Activated naive CD4-positive, alpha-beta T cell treated with anti-CD3 and anti-CD28 coated beads for 36 hours (primary cell): ENCODE measurements at regions of chr12 and their contacts with region 1.

Region 1: DNA sequence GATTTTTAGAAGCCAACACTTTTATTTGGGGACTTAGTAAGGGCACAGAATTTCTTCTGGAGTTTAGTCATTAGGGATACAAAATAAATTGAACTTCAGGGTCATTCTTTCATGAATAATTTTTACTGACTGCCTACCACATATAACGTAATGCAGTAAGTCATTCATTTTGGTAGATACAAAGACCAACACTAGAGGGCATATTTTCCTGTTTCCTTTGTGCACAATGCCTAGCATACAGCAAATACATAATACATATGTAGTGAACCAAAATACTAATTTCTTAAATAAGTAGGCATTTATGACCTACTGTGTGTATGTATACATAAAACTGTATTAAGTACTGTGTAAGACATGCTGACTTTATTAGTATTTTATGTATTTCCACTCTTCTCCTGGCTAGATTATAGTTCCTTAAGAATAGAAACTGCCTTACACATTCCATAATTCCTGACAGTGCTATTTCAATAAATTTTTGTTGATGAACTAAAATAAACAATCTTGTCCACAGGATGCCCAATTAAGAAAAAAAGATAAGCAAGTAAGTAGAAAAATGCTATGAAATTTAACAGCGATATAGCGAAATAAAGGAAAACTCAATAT is 47.9 kb downstream of the PPP1R12A start:
- DNase-seq: no peak
- H3K4me3 Mint-ChIP-seq: no peak overlapping the region
- H3K27ac Mint-ChIP-seq: no peak overlapping the region
- H3K4me1 Mint-ChIP-seq: peaks cover 71% of the 10 kb centered on the region
- H3K27me3 Mint-ChIP-seq: no peaks in the 10 kb centered on the region

Region 2: GRCh38 chr12:79555028-79555930 is 331.7 kb before region 1 on chr12:
- CTCF ChIA-PET with region 1: no interaction called
- intact Hi-C with region 1: loop called (anchors 10 kb)
- DNase-seq: peak; percentile 11
- H3K4me3 Mint-ChIP-seq: no peak overlapping the region
- H3K27ac Mint-ChIP-seq: no peak overlapping the region
- H3K4me1 Mint-ChIP-seq: no peaks in the 10 kb centered on the region
- H3K27me3 Mint-ChIP-seq: no peaks in the 10 kb centered on the region

Region 3: DNA sequence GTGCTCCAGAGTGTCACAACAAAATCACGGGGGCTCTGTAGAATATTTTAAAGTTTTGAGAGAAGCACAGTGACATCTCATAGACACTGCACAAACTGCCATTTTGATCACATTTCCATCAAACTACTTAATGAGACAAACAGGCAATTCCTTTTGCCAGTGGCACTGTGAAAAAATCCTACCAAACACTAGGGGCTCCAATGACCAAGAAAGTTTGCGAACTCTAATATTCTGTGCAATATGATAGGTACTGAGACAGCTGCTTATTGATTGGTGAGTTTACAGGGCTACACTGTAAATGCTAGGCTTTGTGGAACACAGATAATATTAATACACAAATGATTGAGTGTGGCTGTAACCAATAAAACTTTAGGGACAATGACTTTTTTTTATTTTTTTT is 75.7 kb before region 1 on chr12:
- CTCF ChIA-PET with region 1: no interaction called
- intact Hi-C with region 1: no loop called
- DNase-seq: no peak
- H3K4me3 Mint-ChIP-seq: no peak overlapping the region
- H3K27ac Mint-ChIP-seq: no peak overlapping the region
- H3K4me1 Mint-ChIP-seq: no peaks in the 10 kb centered on the region
- H3K27me3 Mint-ChIP-seq: no peaks in the 10 kb centered on the region

Region 4: GRCh38 chr12:79897617-79898016 is 10.6 kb after region 1 on chr12:
- CTCF ChIA-PET with region 1: interaction called, 6 read pairs
- intact Hi-C with region 1: loop called (anchors 2 kb)
- DNase-seq: no peak
- H3K4me3 Mint-ChIP-seq: no peak overlapping the region
- H3K27ac Mint-ChIP-seq: no peak overlapping the region
- H3K4me1 Mint-ChIP-seq: peaks cover 59% of the 10 kb centered on the region
- H3K27me3 Mint-ChIP-seq: no peaks in the 10 kb centered on the region

Region 5: DNA sequence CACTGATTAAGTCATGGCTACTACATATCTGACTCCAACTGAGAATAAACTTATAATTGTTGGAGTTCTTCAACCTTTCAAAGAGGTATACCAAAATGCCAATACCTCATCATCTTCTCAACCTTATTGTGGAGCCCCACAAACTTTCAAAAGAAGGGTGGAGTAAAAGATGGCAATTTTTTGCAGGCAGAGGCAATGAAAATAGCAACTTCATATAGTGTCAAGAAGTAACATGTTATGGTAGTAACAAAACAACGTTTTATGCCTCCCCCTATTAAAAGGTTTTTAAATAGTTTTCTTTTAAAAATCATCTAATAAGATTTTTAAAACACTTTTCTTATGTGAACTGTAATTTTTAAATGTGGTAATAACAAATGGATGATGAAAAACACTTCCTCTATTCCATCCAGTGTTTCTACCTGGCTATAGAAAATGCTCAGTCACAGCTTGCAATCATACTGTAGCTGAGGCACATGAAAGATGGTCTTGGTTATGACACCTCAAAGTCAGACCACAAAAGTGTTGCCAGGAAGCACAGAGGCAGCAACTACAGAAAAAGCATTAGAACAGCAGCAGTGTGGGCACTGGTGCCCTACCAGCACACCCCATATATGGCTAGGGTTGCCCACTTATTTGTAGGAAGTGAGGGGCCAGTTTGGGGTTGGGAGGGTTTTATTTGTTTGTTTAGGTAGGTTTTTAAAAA is 40.9 kb after region 1 on chr12:
- CTCF ChIA-PET with region 1: no interaction called
- intact Hi-C with region 1: loop called (anchors 1 kb)
- DNase-seq: peak; percentile 68
- H3K4me3 Mint-ChIP-seq: no peak overlapping the region
- H3K27ac Mint-ChIP-seq: peak overlapping the region; percentile 53
- H3K4me1 Mint-ChIP-seq: peaks cover 53% of the 10 kb centered on the region
- H3K27me3 Mint-ChIP-seq: no peaks in the 10 kb centered on the region

Region 6: GRCh38 chr12:79935021-79935623 is 48.1 kb after region 1 on chr12 and contains the start of gene PPP1R12A:
- CTCF ChIA-PET with region 1: no interaction called
- intact Hi-C with region 1: loop called (anchors 1 kb)
- DNase-seq: peak; percentile 94
- H3K4me3 Mint-ChIP-seq: peak within 1 kb of the TSS; percentile 98
- H3K27ac Mint-ChIP-seq: peak within 1 kb of the TSS; percentile 98
- H3K4me1 Mint-ChIP-seq: peaks cover 28% of the 10 kb centered on the region
- H3K27me3 Mint-ChIP-seq: no peaks in the 10 kb centered on the region
- total RNA-seq, gene PPP1R12A: 56.3 to 63.3 TPM

Region 7: DNA sequence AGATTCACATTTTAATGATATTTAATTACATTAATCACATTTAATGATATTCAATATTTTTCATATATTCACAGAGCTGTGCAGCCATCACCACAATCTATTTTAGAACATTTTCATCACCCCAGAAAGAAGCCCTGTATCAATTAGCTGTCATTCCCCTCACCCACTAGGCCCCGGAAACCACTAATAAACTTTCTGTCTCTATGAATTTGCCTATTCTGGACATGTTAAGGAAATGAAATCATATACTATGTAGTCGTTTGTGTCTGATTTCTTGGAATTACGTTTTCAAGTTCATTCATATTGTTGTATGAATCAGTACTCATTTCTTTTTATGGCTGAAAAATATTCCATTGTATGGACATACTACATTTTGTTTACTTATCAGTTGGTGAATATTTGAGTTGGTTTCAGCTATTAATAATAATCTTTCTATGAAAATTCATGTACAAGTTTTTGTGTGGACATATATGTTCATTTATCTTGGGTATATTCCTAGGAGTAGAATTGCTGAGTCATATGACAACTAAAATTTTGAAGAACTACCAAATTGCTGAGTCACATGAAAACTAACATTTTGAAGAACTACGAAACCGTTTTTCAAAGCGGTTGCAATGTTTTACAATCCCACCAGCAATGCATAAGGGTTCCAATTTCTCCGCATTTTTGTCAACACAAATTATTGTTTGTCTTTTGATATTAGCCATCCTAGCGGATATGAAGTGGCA is 200.6 kb after region 1 on chr12:
- CTCF ChIA-PET with region 1: no interaction called
- intact Hi-C with region 1: loop called (anchors 5 kb)
- DNase-seq: no peak
- H3K4me3 Mint-ChIP-seq: no peak overlapping the region
- H3K27ac Mint-ChIP-seq: no peak overlapping the region
- H3K4me1 Mint-ChIP-seq: peaks cover 13% of the 10 kb centered on the region
- H3K27me3 Mint-ChIP-seq: no peaks in the 10 kb centered on the region

Region 8: GRCh38 chr12:80269803-80270552 is 383.0 kb after region 1 on chr12:
- CTCF ChIA-PET with region 1: interaction called, 3 read pairs
- intact Hi-C with region 1: loop called (anchors 1 kb)
- DNase-seq: no peak
- H3K4me3 Mint-ChIP-seq: no peak overlapping the region
- H3K27ac Mint-ChIP-seq: no peak overlapping the region
- H3K4me1 Mint-ChIP-seq: no peaks in the 10 kb centered on the region
- H3K27me3 Mint-ChIP-seq: peaks cover 10% of the 10 kb centered on the region

Region 9: DNA sequence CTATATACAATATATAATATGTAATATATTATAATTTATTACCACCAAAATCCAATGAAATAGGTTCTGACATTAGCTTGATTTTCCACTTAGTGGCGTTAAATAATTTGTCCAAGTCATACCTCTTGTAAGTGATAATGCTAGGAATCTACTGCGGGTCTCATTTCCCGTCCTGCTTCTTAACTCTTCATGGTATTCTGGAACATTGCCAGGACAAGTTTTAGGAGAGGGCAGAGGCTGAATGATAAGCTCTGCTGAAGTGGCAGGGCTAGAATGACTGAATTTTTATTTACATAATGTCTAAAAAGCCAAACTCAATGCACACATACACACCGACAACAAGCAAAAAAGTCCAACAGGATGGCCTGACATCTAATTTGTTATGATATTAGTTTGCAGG is 486.6 kb after region 1 on chr12:
- CTCF ChIA-PET with region 1: no interaction called
- intact Hi-C with region 1: no loop called
- DNase-seq: no peak
- H3K4me3 Mint-ChIP-seq: no peak overlapping the region
- H3K27ac Mint-ChIP-seq: no peak overlapping the region
- H3K4me1 Mint-ChIP-seq: no peaks in the 10 kb centered on the region
- H3K27me3 Mint-ChIP-seq: no peaks in the 10 kb centered on the region